B cell (primary cell): ENCODE measurements at regions of chr18 and their contacts with region 1.

Region 1: GRCh38 chr18:23356915-23357601 is 96.0 kb upstream of the RIOK3 start:
- DNase-seq: no peak
- ATAC-seq: no peak
- H3K4me3 ChIP-seq: no peak overlapping the region
- H3K4me3 Mint-ChIP-seq: no peak overlapping the region
- H3K27ac ChIP-seq: no peak overlapping the region
- H3K27ac Mint-ChIP-seq: no peak overlapping the region
- H3K4me1 ChIP-seq: peaks cover 17 to 24% of the 10 kb centered on the region in 2 donors
- H3K4me1 Mint-ChIP-seq: peaks cover 35% of the 10 kb centered on the region
- H3K27me3 ChIP-seq: no peaks in the 10 kb centered on the region
- H3K27me3 Mint-ChIP-seq: no peaks in the 10 kb centered on the region
- CTCF ChIP-seq: no peak

Region 2: GRCh38 chr18:22800551-22800951 is 556.5 kb before region 1 on chr18:
- CTCF ChIA-PET with region 1: interaction called, 22 read pairs
- POLR2A ChIA-PET with region 1: interaction called, 3 read pairs
- intact Hi-C with region 1: no loop called
- DNase-seq: no peak
- ATAC-seq: no peak
- H3K4me3 ChIP-seq: no peak overlapping the region
- H3K4me3 Mint-ChIP-seq: no peak overlapping the region
- H3K27ac ChIP-seq: no peak overlapping the region
- H3K27ac Mint-ChIP-seq: no peak overlapping the region
- H3K4me1 ChIP-seq: no peaks in the 10 kb centered on the region
- H3K4me1 Mint-ChIP-seq: no peaks in the 10 kb centered on the region
- H3K27me3 ChIP-seq: peaks cover 0 to 2% (median 0%) of the 10 kb centered on the region in 4 experiments
- H3K27me3 Mint-ChIP-seq: no peaks in the 10 kb centered on the region
- CTCF ChIP-seq: no peak

Region 3: GRCh38 chr18:23131693-23132319 is 225.3 kb before region 1 on chr18:
- CTCF ChIA-PET with region 1: interaction called, 182 read pairs
- POLR2A ChIA-PET with region 1: interaction called, 5 read pairs
- intact Hi-C with region 1: loop called (anchors 1 kb)
- DNase-seq: peak; percentile 85
- ATAC-seq: no peak
- H3K4me3 ChIP-seq: no peak overlapping the region
- H3K4me3 Mint-ChIP-seq: no peak overlapping the region
- H3K27ac ChIP-seq: no peak overlapping the region
- H3K27ac Mint-ChIP-seq: no peak overlapping the region
- H3K4me1 ChIP-seq: peaks cover 24 to 28% of the 10 kb centered on the region in 2 donors
- H3K4me1 Mint-ChIP-seq: peaks cover 21% of the 10 kb centered on the region
- H3K27me3 ChIP-seq: peaks cover 0 to 33% (median 16%) of the 10 kb centered on the region in 4 experiments
- H3K27me3 Mint-ChIP-seq: peaks cover 16% of the 10 kb centered on the region
- CTCF ChIP-seq: peak; percentile 95

Region 4: DNA sequence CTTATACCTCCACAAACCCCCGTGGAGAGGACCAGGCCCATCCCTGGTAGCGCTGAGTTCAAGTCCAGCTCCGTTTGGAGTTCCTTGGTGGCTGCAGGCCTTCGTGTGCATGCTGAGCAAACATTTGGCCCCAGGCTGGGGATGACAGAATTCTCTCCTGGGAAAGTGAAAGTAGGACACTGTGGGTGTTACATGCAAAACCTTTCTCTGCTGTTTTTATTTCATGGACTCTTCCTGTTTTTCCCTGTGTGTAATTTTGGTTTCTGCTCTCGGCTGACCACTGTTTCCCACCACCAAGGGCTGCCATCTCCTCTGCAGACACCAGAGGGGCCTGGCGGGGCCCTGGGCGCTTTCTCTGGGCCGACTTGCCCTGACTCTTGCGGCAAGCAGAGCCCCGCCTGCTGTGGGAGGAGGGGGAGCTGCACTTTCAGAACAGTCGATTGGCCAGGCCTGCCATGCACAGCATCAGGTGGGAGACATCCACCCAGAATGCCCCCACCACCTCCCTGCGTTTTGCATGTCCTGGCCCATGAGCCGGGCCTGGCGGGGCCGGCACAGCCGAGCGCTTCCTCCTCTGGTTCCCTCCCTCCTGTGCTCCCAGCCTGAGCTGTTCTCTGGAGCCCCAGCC is 119.4 kb before region 1 on chr18:
- CTCF ChIA-PET with region 1: interaction called, 12 read pairs
- POLR2A ChIA-PET with region 1: interaction called, 4 read pairs
- intact Hi-C with region 1: no loop called
- DNase-seq: peak; percentile 69
- ATAC-seq: peak; percentile 59
- H3K4me3 ChIP-seq: peak overlapping the region in 4 of 5 experiments; percentile 22 to 55 (median 26)
- H3K4me3 Mint-ChIP-seq: peak overlapping the region; percentile 80
- H3K27ac ChIP-seq: no peak overlapping the region
- H3K27ac Mint-ChIP-seq: peak overlapping the region; percentile 54
- H3K4me1 ChIP-seq: peaks cover 14 to 19% of the 10 kb centered on the region in 2 donors
- H3K4me1 Mint-ChIP-seq: peaks cover 37% of the 10 kb centered on the region
- H3K27me3 ChIP-seq: peaks cover 0 to 2% (median 0%) of the 10 kb centered on the region in 4 experiments
- H3K27me3 Mint-ChIP-seq: peaks cover 4% of the 10 kb centered on the region
- CTCF ChIP-seq: no peak

Region 5: DNA sequence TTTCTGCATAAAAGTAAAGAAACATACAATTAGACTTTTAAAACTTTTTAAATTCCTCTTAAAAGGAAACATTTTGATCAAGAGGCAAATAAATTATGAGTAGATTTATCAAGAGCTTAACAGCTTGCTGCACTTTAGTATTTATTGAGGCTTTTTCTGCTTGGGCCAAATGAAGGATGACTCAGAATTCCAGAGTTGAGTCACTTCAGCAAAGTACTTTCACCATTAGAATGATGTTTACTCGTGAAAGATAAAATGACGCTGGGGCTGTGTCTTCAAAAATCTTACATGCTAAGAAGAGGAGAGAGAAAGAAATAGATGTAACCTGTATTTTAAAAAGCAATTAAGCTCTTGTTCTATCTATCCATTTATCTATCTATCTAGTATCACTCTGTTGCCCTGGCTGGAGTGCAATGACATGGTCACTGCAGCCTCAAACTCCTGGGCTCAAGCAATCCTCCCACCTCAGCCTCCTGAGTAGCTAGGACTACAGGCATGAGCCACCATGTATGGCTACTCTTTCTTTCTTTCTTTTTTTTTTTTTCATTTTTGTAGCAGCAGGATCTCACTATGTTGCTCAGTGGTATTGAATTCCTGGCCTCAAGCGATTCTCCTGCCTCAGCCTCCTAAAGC is 20.7 kb after region 1 on chr18:
- CTCF ChIA-PET with region 1: interaction called, 13 read pairs
- POLR2A ChIA-PET with region 1: no interaction called
- intact Hi-C with region 1: loop called (anchors 2 kb)
- DNase-seq: no peak
- ATAC-seq: no peak
- H3K4me3 ChIP-seq: no peak overlapping the region
- H3K4me3 Mint-ChIP-seq: no peak overlapping the region
- H3K27ac ChIP-seq: no peak overlapping the region
- H3K27ac Mint-ChIP-seq: no peak overlapping the region
- H3K4me1 ChIP-seq: no peaks in the 10 kb centered on the region
- H3K4me1 Mint-ChIP-seq: no peaks in the 10 kb centered on the region
- H3K27me3 ChIP-seq: no peaks in the 10 kb centered on the region
- H3K27me3 Mint-ChIP-seq: no peaks in the 10 kb centered on the region
- CTCF ChIP-seq: no peak